ENCODE measurements at regions of chr19 and their contacts with region 1.

Region 1: DNA sequence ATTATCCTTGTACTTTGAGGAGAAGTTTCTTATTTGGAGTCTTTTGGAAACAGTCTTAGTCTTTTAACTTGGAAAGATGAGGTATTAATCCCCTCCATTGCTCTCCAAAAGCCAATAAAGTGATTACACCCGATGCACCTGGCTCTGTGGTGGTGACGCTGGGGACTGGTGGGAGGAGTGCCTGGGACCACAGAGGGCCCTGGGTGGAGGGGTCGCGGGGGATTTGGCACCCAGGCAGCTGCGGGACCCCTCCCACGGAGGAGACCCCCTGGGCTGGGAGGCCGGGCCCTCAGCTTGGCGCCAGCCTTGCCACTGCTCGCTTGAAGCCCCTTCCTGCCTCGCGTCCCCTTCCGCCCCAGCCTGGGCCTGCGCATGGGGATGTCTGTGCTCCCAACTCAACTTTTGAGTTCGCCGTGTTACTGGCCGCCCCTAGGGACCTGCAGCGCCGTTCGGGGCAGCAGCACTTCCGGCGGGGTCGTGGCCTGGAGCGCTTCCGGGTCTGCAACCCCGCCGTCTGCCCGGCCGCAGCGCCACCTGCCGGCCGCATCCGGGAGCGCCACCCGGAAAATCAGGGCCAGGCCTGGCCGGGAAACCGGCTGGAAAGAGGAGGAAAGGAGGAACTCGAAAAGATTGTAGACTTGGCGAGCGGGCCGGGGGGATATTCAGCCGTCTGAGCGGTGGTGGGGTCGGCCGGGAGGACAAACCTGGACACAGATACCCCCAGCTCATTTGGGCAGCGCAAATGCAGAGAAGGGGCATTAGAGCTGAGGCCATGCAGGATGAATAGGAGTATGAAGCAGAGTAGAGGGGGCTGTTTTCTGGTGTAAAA is 8.4 kb downstream of the PEAK3 start:
- DNase-seq: peak; percentile 65 to 87 (median 75)
- H3K4me3 ChIP-seq: peak overlapping the region; percentile 17
- H3K27ac ChIP-seq: peak overlapping the region; percentile 28 to 35
- H3K4me1 ChIP-seq: peaks cover 20% of the 10 kb centered on the region
- H3K27me3 ChIP-seq: no peaks in the 10 kb centered on the region
- CTCF ChIP-seq: peak; percentile 96 to 99 (median 96)
- EP300 ChIP-seq: no peak
- POLR2A ChIP-seq: no peak

Region 2: DNA sequence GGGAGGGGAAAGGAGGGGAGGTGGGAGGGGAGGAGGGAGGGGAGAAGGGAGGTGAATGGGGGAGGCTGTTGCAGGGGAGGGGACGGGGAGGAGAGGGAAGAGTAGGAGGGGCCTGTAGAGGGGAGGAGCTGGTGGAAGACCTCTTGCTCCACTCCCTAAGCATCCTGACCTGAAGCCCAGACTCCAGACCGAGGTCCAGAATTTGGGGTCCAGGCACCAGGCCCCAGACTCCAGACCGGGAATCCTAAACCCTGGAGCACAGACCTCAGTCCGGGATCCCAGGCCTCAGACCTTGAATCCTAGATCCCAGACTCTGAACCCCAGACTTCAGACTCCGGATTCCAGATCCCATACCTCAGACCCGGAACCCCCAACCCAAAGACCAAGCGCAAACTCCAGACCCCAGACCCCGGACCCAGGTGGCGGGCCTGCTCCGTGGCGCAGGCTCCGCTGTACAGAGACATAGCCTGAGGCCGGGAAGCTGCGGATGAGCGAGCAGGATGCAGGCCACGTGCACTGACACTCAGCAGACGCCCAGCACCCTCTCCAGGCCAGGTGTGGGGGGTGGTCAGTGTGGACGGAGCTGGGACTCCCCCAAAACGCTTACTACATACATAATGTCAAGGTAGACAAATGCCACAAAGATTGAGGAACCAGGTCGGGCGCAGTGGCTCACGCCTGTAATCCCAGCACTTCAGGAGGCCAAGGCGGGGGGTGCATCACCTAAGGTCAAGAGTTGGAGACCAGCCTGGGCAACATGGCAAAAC is 257.3 kb before region 1 on chr19:
- intact Hi-C with region 1: loop called in 1 of 4 experiments (anchors 5 kb)
- DNase-seq: peak; percentile 81 to 92 (median 88)
- H3K4me3 ChIP-seq: peak overlapping the region; percentile 21
- H3K27ac ChIP-seq: peak overlapping the region; percentile 60 to 79
- H3K4me1 ChIP-seq: peaks cover 8% of the 10 kb centered on the region
- H3K27me3 ChIP-seq: no peaks in the 10 kb centered on the region
- CTCF ChIP-seq: no peak
- EP300 ChIP-seq: no peak
- POLR2A ChIP-seq: no peak

Region 3: GRCh38 chr19:2151339-2152229 is 122.0 kb before region 1 on chr19 and contains the start of gene AP3D1:
- intact Hi-C with region 1: loop called in 2 of 4 experiments (anchors 5 to 10 kb)
- DNase-seq: peak; percentile 100
- H3K4me3 ChIP-seq: peak within 1 kb of the TSS; percentile 98
- H3K27ac ChIP-seq: peak within 1 kb of the TSS; percentile 25 to 33
- H3K4me1 ChIP-seq: peaks cover 12% of the 10 kb centered on the region
- H3K27me3 ChIP-seq: no peaks in the 10 kb centered on the region
- CTCF ChIP-seq: no peak
- EP300 ChIP-seq: no peak
- POLR2A ChIP-seq: no peak
- total RNA-seq, gene AP3D1: 36.7 to 102 (median 75.4) TPM

Region 4: DNA sequence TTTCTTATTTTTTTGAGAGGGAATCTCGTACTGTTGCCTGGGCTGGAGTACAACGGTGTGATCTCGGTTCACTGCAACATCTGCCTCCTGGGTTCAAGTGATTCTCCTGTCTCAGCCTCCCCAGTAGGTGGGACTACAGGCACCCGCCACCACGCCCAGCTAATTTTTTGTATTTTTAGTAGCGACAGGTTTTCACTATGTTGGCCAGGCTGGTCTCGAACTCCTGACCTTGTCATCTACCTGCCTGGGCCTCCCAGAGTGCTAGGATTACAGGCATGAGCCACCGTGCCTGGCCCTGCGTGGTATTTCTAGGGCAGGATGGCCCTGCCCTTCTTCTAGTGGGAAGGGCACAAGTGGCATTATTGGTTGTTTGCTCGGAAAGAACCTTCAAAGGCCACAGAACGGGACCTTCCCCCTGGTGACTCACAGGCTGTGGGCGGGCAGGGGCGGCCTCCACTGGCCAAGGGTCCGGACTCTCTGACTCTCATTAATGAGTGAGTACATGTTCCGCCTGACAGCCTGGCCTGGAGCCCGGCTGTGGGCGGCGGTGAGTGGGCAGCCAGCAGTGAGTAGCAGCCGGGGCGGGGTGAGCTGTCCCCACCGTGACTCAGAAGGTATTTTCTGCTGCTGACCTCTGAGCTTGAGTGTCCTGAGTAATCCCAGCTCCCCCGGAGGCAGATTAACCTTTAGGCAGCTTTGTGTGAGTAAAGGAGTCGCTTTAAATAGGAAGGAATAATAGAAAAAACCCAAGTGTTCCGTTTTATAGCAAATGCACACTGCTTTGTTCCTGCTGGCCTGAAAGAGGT is 104.7 kb before region 1 on chr19:
- intact Hi-C with region 1: loop called in 2 of 4 experiments (anchors 5 kb)
- DNase-seq: peak; percentile 91 to 95 (median 94)
- H3K4me3 ChIP-seq: no peak overlapping the region
- H3K27ac ChIP-seq: peak overlapping the region; percentile 9 to 61
- H3K4me1 ChIP-seq: peaks cover 41% of the 10 kb centered on the region
- H3K27me3 ChIP-seq: no peaks in the 10 kb centered on the region
- CTCF ChIP-seq: no peak
- EP300 ChIP-seq: peak; percentile 29
- POLR2A ChIP-seq: no peak

Region 5: DNA sequence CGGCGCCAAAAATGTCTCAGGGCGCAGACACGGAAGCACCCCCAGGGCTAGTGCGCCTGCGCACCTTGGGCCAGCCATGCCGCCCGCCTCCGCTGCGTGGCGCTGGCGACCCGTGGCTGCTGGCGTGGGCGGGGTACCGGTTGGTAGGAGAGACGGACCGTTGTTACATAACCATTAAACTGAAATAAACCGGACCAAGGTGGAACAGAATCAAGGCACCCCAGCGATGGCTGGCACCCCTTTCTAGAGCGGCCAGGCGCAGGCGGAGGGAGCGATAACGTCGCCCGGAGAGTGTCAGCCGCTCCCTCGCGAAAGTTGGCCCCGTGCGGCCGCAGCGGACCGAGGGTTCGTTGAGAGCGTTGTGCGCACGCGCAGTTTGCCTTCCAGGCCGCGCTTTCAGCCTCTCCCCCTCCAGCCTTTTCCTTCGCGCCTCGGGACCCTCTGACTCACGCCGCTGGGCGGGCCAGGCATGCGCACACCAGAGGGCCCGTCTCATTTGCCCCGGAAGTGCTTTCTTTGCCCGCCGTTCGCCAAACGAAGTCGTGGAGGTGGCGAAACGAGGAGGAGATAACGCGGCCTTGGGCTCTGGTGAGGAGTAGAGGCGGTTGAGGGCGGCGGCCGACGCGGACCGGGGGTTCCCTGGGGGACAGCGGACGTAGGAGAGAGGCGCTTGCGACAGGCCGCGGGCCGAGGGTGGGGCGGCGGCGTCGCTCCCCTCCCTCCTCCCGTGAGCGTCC is 37.1 kb before region 1 on chr19 and contains the starts of genes PLEKHJ1 and SF3A2:
- intact Hi-C with region 1: loop called (anchors 2 to 5 kb)
- DNase-seq: peak; percentile 97 to 100 (median 97)
- H3K4me3 ChIP-seq: peak within 1 kb of the TSS; percentile 92
- H3K27ac ChIP-seq: peak within 1 kb of the TSS; percentile 92 to 100
- H3K4me1 ChIP-seq: peaks cover 26% of the 10 kb centered on the region
- H3K27me3 ChIP-seq: no peaks in the 10 kb centered on the region
- CTCF ChIP-seq: peak; percentile 95 to 100 (median 100)
- EP300 ChIP-seq: peak; percentile 46
- POLR2A ChIP-seq: peak; percentile 81
- total RNA-seq, gene PLEKHJ1: 39.0 to 55.2 (median 46.8) TPM
- total RNA-seq, gene SF3A2: 33.0 to 137 (median 89.8) TPM

Region 6: DNA sequence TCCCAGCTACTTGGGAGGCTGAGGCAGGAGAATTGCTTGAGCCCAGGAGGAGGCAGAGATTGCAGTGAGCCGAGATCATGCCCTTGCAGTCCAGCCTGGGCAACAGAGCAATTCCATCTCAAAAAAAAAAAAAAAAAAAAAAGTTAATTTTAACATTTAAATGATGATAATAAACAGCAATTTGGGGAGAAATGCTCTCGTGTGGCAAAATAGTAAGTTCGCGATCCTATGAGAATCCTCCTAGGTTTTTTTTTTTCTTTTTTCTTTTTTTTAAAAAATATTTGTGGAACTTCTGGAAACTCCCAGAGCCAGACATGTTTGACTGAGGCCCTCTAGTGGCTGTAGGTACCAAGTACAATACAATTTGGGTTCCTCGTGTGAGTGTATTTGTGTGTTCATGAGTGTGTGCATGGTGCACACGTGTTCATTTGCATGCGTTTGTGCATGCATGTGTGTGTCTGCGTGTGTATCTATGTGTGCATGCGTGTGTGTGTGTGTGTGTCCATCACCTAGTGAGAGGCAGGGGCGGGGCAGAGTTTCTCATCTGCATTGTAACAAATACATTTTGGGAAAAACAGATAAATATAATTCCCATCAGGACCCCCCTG is 117.7 kb after region 1 on chr19:
- intact Hi-C with region 1: loop called in 1 of 4 experiments (anchors 10 kb)
- DNase-seq: peak in 1 of 5 donors; percentile 56
- H3K4me3 ChIP-seq: no peak overlapping the region
- H3K27ac ChIP-seq: no peak overlapping the region
- H3K4me1 ChIP-seq: no peaks in the 10 kb centered on the region
- H3K27me3 ChIP-seq: no peaks in the 10 kb centered on the region
- CTCF ChIP-seq: peak; percentile 52 to 68 (median 64)
- EP300 ChIP-seq: no peak
- POLR2A ChIP-seq: no peak

Region 7: GRCh38 chr19:2610637-2611482 is 337.3 kb after region 1 on chr19:
- intact Hi-C with region 1: loop called in 1 of 4 experiments (anchors 10 kb)
- DNase-seq: peak; percentile 91 to 97 (median 95)
- H3K4me3 ChIP-seq: peak overlapping the region; percentile 44
- H3K27ac ChIP-seq: peak overlapping the region in 1 of 2 donors; percentile 48
- H3K4me1 ChIP-seq: no peaks in the 10 kb centered on the region
- H3K27me3 ChIP-seq: no peaks in the 10 kb centered on the region
- CTCF ChIP-seq: peak; percentile 90 to 99 (median 97)
- EP300 ChIP-seq: peak; percentile 61
- POLR2A ChIP-seq: peak; percentile 44